CD4-positive, alpha-beta memory T cell (primary cell): ENCODE measurements at regions of chr1 and their contacts with region 1.

Region 1: GRCh38 chr1:109643385-109644230 is 12.3 kb upstream of the GSTM4 start:
- DNase-seq: peak; percentile 75 to 83 (median 79)
- H3K4me3 ChIP-seq: no peak overlapping the region
- H3K4me3 Mint-ChIP-seq: no peak overlapping the region
- H3K27ac ChIP-seq: no peak overlapping the region
- H3K27ac Mint-ChIP-seq: peak overlapping the region in 1 of 7 donors; percentile 42
- H3K4me1 ChIP-seq: peaks cover 14% of the 10 kb centered on the region
- H3K4me1 Mint-ChIP-seq: peaks cover 4 to 14% (median 8%) of the 10 kb centered on the region in 4 donors
- H3K27me3 ChIP-seq: no peaks in the 10 kb centered on the region
- H3K27me3 Mint-ChIP-seq: peaks cover 2% of the 10 kb centered on the region in 2 donors

Region 2: GRCh38 chr1:109570417-109570827 is 73.2 kb before region 1 on chr1:
- CTCF ChIA-PET with region 1: interaction called, 12 read pairs
- POLR2A ChIA-PET with region 1: no interaction called
- intact Hi-C with region 1: no loop called
- DNase-seq: no peak
- H3K4me3 ChIP-seq: no peak overlapping the region
- H3K4me3 Mint-ChIP-seq: no peak overlapping the region
- H3K27ac ChIP-seq: no peak overlapping the region
- H3K27ac Mint-ChIP-seq: no peak overlapping the region
- H3K4me1 ChIP-seq: peaks cover 35% of the 10 kb centered on the region
- H3K4me1 Mint-ChIP-seq: peaks cover 18 to 40% (median 32%) of the 10 kb centered on the region in 4 donors
- H3K27me3 ChIP-seq: no peaks in the 10 kb centered on the region
- H3K27me3 Mint-ChIP-seq: no peaks in the 10 kb centered on the region

Region 3: GRCh38 chr1:109620841-109621286 is 22.7 kb before region 1 on chr1:
- CTCF ChIA-PET with region 1: interaction called, 140 read pairs
- POLR2A ChIA-PET with region 1: interaction called, 9 read pairs
- intact Hi-C with region 1: no loop called
- DNase-seq: peak; percentile 96 to 99 (median 97)
- H3K4me3 ChIP-seq: peak overlapping the region; percentile 76 to 93
- H3K4me3 Mint-ChIP-seq: peak overlapping the region; percentile 92 to 99 (median 96)
- H3K27ac ChIP-seq: peak overlapping the region; percentile 96
- H3K27ac Mint-ChIP-seq: peak overlapping the region; percentile 91 to 99 (median 99)
- H3K4me1 ChIP-seq: peaks cover 72% of the 10 kb centered on the region
- H3K4me1 Mint-ChIP-seq: peaks cover 47 to 86% (median 58%) of the 10 kb centered on the region in 4 donors
- H3K27me3 ChIP-seq: no peaks in the 10 kb centered on the region
- H3K27me3 Mint-ChIP-seq: no peaks in the 10 kb centered on the region

Region 4: DNA sequence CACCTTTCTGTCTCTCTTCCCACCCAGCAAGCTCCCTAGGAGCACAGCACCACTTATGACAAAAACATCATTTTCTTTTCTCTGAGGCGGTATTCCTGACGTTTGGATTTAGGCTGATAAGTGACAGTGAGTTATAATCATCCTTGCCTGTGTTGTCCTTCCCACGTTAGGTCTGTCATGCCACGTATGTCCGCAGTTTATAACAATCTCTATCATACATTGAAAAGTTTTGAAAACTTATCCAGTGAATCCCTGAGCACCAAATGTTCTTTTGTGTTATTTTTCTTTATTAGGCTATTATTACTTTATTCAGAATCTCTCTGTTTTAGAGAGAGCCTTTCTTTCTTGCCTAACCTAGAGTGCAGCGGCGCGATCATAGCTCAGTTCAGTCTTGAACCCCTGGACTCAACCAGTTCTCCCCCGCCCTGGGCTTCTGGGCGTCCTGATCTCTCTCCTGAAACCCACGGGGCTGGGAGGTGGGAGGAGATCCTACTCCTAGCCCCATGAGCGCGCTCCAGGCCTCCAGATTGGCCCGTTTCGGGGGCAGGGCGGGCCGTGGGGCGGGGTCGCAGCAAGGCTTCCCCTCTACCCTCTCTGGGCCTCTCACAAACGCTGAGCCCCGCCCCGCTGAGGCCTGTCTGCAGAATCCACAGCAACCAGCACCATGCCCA is 24.0 kb after region 1 on chr1 and contains the start of gene GSTM2:
- CTCF ChIA-PET with region 1: interaction called, 17 read pairs
- POLR2A ChIA-PET with region 1: no interaction called
- intact Hi-C with region 1: no loop called
- DNase-seq: peak; percentile 64 to 79 (median 67)
- H3K4me3 ChIP-seq: peak within 1 kb of the TSS in 1 of 2 donors; percentile 30
- H3K4me3 Mint-ChIP-seq: peak within 1 kb of the TSS; percentile 70 to 88 (median 80)
- H3K27ac ChIP-seq: no peak within 1 kb of the TSS
- H3K27ac Mint-ChIP-seq: peak within 1 kb of the TSS in 5 of 7 donors; percentile 4 to 74 (median 41)
- H3K4me1 ChIP-seq: peaks cover 6% of the 10 kb centered on the region
- H3K4me1 Mint-ChIP-seq: peaks cover 8 to 21% (median 15%) of the 10 kb centered on the region in 4 donors
- H3K27me3 ChIP-seq: no peaks in the 10 kb centered on the region
- H3K27me3 Mint-ChIP-seq: no peaks in the 10 kb centered on the region
- total RNA-seq, gene GSTM2: 30.9 to 31.4 TPM

Region 5: GRCh38 chr1:109790735-109791494 is 147.3 kb after region 1 on chr1:
- CTCF ChIA-PET with region 1: interaction called, 16 read pairs
- POLR2A ChIA-PET with region 1: no interaction called
- intact Hi-C with region 1: no loop called
- DNase-seq: peak; percentile 72 to 87 (median 76)
- H3K4me3 ChIP-seq: no peak overlapping the region
- H3K4me3 Mint-ChIP-seq: peak overlapping the region in 7 of 8 donors; percentile 35 to 82 (median 55)
- H3K27ac ChIP-seq: peak overlapping the region; percentile 39
- H3K27ac Mint-ChIP-seq: peak overlapping the region; percentile 82 to 95 (median 92)
- H3K4me1 ChIP-seq: peaks cover 81% of the 10 kb centered on the region
- H3K4me1 Mint-ChIP-seq: peaks cover 43 to 91% (median 73%) of the 10 kb centered on the region in 4 donors
- H3K27me3 ChIP-seq: no peaks in the 10 kb centered on the region
- H3K27me3 Mint-ChIP-seq: no peaks in the 10 kb centered on the region

Region 6: GRCh38 chr1:110011527-110012041 is 368.0 kb after region 1 on chr1:
- CTCF ChIA-PET with region 1: interaction called, 14 read pairs
- POLR2A ChIA-PET with region 1: no interaction called
- intact Hi-C with region 1: loop called (anchors 1 kb)
- DNase-seq: peak in 4 of 5 donors; percentile 26 to 44 (median 40)
- H3K4me3 ChIP-seq: no peak overlapping the region
- H3K4me3 Mint-ChIP-seq: no peak overlapping the region
- H3K27ac ChIP-seq: no peak overlapping the region
- H3K27ac Mint-ChIP-seq: peak overlapping the region in 5 of 7 donors; percentile 19 to 91 (median 36)
- H3K4me1 ChIP-seq: no peaks in the 10 kb centered on the region
- H3K4me1 Mint-ChIP-seq: peaks cover 0 to 5% (median 4%) of the 10 kb centered on the region in 4 donors
- H3K27me3 ChIP-seq: no peaks in the 10 kb centered on the region
- H3K27me3 Mint-ChIP-seq: no peaks in the 10 kb centered on the region

Region 7: GRCh38 chr1:111133866-111134265 is 1490.3 kb after region 1 on chr1:
- CTCF ChIA-PET with region 1: no interaction called
- POLR2A ChIA-PET with region 1: no interaction called
- intact Hi-C with region 1: no loop called
- DNase-seq: no peak
- H3K4me3 ChIP-seq: no peak overlapping the region
- H3K4me3 Mint-ChIP-seq: no peak overlapping the region
- H3K27ac ChIP-seq: no peak overlapping the region
- H3K27ac Mint-ChIP-seq: peak overlapping the region in 2 of 7 donors; percentile 57 to 75
- H3K4me1 ChIP-seq: peaks cover 16% of the 10 kb centered on the region
- H3K4me1 Mint-ChIP-seq: peaks cover 12 to 16% (median 14%) of the 10 kb centered on the region in 4 donors
- H3K27me3 ChIP-seq: no peaks in the 10 kb centered on the region
- H3K27me3 Mint-ChIP-seq: no peaks in the 10 kb centered on the region